Right ventricle myocardium superior (tissue), 1 donor: ENCODE measurements at regions of chr3 and their contacts with region 1.

Region 1: DNA sequence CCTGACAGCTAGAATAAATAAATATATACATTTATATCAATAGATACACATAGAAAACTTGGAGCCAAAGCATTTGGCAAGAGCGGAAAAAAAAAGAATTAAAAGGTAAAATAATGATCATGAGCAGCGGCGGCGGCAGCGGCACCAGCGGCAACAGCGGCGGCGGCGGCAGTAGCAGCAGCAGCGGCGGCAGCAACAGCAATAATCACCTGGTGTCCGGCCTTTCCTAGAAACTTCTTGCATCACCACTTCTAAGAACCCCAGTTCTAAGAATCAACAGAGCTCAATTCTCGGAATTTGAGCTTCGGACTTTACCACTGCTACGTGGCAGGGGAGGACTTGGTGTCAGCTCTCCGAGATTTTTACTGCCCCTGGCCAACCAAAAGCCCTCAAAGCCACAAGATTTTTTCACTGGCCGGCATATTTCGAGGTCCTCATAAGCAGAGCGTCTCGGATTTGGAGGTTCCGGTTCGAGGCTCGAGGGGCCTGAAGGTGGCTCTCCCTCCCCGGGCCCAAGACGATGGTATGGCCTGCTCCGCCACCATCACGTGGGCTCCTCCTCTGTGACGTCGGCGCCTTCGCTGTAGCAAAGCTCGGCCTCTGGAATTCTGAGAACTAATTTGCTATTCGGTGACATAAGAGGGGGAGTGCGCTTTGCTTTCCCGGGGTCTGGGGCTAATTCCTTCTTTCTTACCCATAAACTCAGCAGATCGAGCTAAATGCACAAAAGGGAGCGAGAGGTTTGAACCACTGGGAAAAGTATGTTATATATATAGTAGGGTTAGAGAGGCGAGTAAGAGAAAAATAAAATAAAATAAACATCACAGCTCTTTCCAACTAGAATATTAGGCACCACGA is at the start of gene BCL6:
- DNase-seq: peak; percentile 95
- ATAC-seq: peak; percentile 76
- total RNA-seq, gene BCL6: 82.1 TPM

Region 2: DNA sequence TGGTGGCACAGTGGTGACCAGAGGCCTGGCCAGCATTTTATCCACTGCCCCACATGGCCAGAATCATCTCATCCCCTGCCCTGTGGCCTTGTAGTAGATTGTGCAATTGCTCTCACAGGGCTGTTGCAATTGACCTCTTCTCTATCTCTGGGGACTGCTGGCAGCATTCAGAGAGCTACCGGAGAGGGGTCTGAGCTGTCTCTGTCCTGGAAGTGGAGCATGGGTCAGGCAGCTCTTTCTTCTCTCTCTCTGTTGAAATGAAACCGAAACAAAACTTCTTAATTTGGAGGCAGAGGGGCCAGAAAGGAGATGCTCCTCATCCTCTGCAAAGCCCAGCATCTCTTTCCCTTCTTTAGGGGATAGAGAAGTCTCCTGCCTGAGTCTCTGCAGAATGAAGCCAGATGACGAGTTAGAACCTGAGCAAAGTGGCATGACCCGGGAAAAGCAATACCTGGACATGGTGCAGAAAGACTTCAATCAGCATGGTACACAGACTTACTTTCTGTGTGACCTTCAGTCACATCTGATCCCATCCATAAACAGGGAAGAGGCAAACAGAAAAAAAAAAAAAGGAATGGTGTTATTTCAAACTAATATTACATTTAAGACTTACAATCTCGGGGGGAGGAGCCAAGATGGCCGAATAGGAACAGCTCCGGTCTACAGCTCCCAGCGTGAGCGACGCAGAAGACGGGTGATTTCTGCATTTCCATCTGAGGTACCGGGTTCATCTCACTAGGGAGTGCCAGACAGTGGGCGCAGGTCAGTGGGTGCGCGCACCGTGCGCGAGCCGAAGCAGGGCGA is 144.4 kb after region 1 on chr3:
- intact Hi-C with region 1: no loop called
- DNase-seq: no peak
- ATAC-seq: peak; percentile 80

Region 3: DNA sequence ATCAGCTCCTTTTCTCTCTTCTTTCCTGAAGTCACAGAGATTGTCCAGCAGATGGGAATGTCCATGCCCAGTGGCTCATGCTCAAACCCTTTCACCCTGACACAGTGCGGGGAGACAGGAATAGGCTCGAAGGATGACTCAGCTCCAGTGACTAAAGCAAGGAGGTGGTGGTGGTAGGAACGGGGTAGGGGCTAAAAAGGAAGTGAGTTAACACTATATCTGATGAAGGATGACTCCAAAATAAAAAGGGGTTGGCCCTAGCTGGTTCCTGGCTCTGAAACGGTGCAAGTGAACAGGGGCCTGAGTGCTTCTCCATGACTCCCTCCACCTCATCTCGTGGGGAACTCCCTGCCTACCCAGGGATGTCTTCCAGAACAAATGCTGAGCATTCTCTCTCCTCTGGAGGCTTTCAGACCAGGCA is 241.1 kb after region 1 on chr3:
- intact Hi-C with region 1: loop called (anchors 10 kb)
- DNase-seq: no peak
- ATAC-seq: no peak

Region 4: GRCh38 chr3:188037216-188037718 is 291.8 kb after region 1 on chr3:
- intact Hi-C with region 1: loop called (anchors 10 kb)
- DNase-seq: no peak
- ATAC-seq: peak; percentile 90

Region 5: DNA sequence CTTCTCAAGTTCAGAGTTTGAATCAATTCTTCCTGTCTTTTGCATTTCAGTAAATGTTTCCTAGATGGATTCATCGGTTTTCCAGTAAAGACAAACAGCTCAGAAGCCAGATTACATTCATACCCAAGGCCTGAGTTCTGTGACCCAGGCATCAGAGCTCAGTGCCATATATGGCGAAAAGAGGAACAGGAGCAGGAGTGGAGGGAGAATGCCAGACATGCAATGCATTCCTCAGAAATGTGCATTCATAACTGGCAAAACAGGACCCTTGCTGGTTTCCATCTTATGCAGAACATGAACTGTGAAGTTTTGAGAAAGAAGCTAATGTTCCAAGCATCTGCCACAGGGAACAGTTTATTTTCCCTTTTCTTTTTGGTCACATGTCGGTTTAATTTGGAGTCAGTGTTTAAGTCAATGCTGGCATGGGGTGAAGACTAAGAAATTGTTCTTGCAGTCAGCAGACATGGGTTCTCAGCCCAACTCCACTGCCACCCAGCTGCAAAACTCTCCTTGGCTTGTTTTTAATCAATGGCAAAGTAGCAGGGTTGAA is 525.1 kb after region 1 on chr3:
- intact Hi-C with region 1: loop called (anchors 10 kb)
- DNase-seq: no peak
- ATAC-seq: peak; percentile 26

Region 6: DNA sequence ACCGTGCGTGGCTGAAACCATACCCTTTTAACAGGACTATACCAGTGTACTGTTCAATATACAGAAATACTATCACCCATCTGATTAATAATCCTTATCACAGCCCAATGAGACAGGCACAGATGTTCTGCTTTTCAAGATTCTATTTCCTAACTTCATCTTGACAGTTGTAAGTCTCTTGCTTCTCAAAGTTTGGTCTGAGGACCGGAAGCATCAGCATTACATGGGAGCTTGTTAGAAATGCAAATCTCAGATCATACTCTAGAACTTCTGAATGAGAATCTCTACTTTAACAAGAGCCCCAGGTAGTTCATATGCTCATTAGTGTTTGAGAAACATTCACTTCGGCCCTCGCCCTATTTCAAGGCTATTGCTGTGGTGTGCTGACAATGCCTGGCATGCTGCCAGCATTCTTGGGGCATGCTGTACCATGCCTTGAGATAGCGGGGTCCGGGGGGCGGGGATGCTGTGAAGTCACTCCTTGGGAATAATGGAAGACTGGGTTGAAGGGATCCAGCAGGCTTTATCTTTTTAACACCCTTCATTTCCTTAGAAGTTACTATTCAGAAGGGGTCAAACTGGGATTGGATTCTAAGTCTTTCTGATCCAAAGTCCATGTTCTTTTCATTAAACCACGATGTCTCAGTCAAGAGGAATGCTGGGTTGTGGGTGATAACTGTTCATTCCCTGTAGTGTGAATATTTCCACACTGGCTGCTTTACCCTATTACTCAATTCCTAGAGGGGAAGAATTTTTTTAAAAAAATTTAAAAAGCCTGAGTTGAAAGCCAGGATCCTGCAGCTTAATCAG is 603.2 kb after region 1 on chr3:
- intact Hi-C with region 1: loop called (anchors 10 kb)
- DNase-seq: peak; percentile 89
- ATAC-seq: peak; percentile 75

Region 7: DNA sequence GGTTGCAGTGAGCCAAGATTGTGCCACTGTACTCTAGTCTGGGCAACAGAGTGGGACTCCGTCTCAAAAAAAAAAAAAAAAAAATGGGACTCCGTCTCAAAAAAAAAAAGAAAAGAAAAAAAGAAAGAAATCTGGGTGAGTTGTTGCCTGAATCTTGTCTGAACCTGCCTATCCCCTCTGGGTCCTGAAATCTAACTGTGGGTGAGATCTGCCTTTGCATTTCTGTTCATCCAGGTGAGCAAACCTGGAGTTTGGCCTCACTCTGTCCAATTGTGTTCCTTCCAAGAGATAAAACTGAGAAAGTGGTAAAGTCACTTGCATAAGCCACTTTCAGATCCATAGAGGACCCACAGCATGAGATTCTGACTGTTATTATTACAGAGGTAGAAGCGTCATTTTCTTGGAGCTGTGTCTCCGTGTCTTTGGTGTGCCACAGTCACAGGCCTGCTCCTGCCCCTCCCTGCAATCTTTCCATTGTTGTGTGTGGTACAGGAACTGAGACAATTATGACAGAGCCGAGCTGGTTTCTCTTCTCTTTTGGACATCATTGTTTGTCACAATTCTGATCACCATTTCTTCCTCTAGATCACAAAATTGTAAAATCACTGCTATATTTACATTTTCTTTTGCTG is 644.4 kb after region 1 on chr3:
- intact Hi-C with region 1: loop called (anchors 10 kb)
- DNase-seq: peak; percentile 52
- ATAC-seq: peak; percentile 82